Motor neuron (in vitro differentiated cells): ENCODE measurements at regions of chr22 and their contacts with region 1.

Region 1: GRCh38 chr22:50148991-50149721 is 21.4 kb upstream of the PANX2 start:
- ATAC-seq: peak; percentile 7 to 84 (median 35)
- H3K4me3 ChIP-seq: no peak overlapping the region
- H3K27ac ChIP-seq: no peak overlapping the region
- H3K4me1 ChIP-seq: peaks cover 26 to 27% of the 10 kb centered on the region in 2 donors

Region 2: DNA sequence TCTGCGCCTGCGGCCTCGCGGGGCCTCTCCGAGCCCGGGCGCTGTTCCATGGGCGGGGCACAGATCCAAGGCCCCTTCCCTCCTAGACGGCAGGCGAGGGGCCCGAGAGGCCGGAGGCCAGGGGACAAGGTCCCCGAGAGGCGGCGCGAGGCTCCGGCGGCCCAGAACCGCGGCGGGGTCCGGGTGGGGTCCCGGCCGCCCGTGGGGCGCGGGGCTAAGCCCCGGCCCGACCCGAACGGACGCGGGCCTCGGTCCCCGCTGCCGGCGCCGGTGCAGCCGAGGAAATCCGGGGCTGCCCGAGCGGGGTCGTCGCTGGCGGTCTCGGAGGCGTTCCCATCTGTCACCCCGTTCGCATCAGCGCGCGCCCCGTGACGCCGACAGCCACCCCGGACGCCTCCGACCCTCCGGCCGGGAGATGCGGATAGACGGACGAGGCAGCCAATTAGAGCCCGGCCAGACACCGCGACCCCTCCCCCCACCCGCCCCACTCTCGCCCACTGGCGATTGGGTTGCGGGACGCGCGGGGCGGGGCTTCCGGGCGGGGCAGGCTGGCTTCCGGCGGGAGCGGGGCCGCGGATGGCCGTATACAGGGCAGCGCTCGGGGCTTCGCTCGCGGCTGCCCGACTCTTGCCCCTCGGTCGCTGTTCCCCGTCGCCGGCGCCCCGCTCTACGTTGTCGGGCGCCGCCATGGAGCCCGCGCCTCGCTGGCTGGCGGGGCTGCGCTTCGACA is 51.5 kb after region 1 on chr22 and contains the start of gene SELENOO:
- in situ Hi-C with region 1: loop called in 1 of 9 experiments (anchors 10 kb)
- ATAC-seq: peak; percentile 80 to 92 (median 88)
- H3K4me3 ChIP-seq: peak within 1 kb of the TSS; percentile 74 to 99 (median 94)
- H3K27ac ChIP-seq: peak within 1 kb of the TSS; percentile 88 to 90
- H3K4me1 ChIP-seq: peaks cover 3 to 13% of the 10 kb centered on the region in 2 donors
- total RNA-seq, gene SELENOO: 7.5 to 32.8 (median 11.2) TPM